ENCODE measurements at regions of chr20 and their contacts with region 1.

Region 1: DNA sequence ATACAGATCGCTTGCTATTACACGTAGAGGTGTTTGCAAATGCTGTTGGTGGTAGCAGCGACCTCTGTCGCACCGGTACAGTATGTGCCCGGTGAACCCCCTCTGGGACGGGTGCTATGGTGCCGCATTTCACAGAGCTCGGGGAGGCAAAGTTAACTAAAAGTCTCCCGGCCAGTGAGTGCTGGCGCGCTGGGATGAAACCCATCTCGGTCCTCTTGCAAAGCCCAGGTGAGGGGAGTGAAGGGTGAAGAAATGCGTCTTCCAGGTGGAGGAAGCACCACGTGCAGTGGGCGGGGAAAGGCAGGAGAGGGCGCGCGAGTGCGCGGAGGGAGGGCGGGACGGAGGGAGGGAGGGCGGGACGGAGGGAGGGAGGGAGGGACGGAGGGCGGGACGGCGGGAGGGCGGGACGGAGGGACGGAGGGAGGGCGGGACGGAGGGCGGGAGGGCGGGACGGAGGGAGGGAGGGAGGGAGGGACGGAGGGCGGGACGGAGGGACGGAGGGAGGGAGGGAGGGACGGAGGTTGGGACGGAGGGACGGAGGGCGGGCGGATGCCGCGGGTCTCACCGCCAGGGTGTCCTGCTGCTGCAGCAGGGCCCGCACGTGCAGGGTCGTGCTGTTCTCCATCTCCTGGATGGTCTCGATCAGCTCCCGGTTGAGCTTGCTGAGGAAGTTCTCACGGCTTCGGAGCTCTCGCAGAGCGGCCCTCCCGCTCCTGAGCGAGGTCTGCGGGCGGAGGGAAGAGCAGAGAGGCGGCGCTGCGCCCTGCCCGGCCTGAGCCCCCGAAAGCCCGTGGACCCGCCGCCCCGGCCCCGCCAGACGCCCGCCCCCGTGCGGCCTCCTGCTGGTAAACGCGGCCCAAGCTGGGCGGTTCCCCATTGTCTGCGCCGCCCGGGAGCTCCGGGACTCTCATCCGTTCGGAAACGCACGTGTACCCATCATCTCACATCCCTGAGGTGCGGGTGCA is 11.7 kb downstream of the C20orf96 start:
- DNase-seq: peak; percentile 26
- H3K4me3 ChIP-seq: peak overlapping the region; percentile 29 to 47
- H3K27ac ChIP-seq: peak overlapping the region in 1 of 2 donors; percentile 37
- H3K4me1 ChIP-seq: peaks cover 4% of the 10 kb centered on the region
- H3K27me3 ChIP-seq: no peaks in the 10 kb centered on the region
- CTCF ChIP-seq: no peak
- POLR2A ChIP-seq: no peak

Region 2: DNA sequence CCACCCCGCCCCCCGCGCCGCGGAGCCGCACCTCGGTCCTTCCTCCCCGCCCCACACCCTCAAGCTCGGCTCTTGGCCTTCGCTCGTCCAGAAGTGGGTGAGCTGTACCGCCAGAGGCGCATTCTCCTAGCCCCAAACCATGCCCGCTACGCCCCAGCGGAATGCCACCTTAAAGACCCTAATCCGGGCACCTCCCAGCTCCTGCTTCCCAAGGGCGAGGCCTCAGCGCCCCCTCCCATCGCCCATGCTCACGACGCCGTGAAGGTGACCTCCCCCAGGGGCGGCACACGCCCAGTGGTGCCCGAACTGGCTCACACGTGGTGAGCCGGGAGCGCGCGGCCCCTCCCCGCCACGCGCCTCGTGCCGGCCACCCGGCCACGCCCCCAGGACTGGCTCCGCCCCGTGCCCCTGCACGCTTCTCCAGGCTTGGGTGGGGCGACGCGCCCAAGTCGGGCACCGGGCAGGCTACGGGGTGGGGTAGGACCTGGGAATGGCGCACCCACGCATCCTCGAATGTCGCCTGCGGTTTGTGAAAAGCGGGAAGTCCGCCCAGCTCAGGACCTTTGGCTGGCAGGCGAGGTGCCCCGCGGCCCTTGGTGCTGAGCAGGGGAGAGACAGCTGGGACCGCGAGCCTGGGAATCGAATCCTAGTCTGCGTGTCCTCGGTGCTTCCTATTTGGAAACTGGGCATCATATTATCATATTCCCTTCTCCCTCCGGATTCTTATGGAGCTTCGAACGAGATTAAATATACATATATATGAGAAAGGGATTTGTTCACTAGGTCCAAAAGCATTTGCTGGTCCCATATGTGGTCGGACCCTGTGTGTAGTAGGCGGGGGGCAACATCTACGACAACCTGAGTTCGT is 45.5 kb after region 1 on chr20:
- intact Hi-C with region 1: loop called (anchors 10 kb)
- DNase-seq: peak; percentile 92
- H3K4me3 ChIP-seq: peak overlapping the region; percentile 79 to 80
- H3K27ac ChIP-seq: peak overlapping the region; percentile 66 to 97
- H3K4me1 ChIP-seq: peaks cover 29% of the 10 kb centered on the region
- H3K27me3 ChIP-seq: no peaks in the 10 kb centered on the region
- CTCF ChIP-seq: no peak
- POLR2A ChIP-seq: no peak